MCF 10A (cell line): ENCODE measurements at regions of chr4 and their contacts with region 1.

Region 1: GRCh38 chr4:74376888-74377483 is 12.0 kb downstream of the EREG start:
- DNase-seq: peak; percentile 79
- H3K4me3 Mint-ChIP-seq: peak overlapping the region; percentile 71
- H3K27ac Mint-ChIP-seq: peak overlapping the region; percentile 97
- H3K4me1 Mint-ChIP-seq: peaks cover 20% of the 10 kb centered on the region
- H3K27me3 Mint-ChIP-seq: no peaks in the 10 kb centered on the region
- CTCF ChIP-seq: peak; percentile 71

Region 2: DNA sequence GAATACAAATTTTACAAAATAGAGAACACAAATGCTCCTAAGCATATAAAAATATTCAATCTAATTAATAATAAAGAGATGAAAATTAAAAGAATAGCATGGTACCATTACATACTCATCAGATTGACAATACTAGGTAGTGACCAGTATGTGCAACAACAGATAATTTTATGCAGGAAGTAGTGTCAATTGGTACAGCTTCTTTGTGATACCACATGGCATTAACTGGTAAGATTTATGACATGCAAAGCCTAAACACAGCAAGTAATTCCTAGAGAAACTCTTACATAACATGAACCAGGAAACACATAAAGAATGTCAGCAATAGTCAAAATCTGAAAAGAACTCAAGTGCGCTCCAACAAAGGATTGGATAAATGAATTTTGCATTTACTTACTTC is 304.2 kb before region 1 on chr4:
- CTCF ChIA-PET with region 1: no interaction called
- POLR2A ChIA-PET with region 1: no interaction called
- intact Hi-C with region 1: no loop called
- DNase-seq: no peak
- H3K4me3 Mint-ChIP-seq: no peak overlapping the region
- H3K27ac Mint-ChIP-seq: no peak overlapping the region
- H3K4me1 Mint-ChIP-seq: no peaks in the 10 kb centered on the region
- H3K27me3 Mint-ChIP-seq: no peaks in the 10 kb centered on the region
- CTCF ChIP-seq: no peak

Region 3: DNA sequence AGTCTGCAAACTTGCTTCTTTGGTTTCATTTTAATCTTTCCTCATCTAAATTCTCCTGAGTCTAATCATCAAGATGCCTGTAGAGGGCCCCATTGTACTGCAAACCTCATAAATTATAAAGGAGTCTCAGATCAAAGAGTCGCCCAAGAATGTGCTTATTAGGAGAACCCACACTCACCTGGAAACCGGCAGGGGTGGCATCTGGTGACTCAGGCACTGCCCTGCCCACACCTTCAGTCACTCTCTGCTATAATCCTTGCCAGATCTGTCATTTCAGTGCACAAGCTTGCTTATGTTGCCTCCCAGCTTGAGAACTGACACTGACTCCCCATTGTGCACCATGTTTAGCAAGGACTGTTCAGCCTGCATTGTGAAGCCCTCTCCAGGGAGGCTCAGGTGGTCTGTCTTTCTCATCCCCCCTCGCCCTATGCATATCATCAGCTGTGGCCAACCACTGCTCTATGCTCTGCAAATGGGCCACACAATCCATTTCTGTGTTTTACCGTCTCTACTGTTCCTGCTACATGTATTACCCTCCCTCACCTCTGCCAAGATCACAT is 56.3 kb before region 1 on chr4:
- CTCF ChIA-PET with region 1: interaction called, 28 read pairs
- POLR2A ChIA-PET with region 1: interaction called, 23 read pairs
- intact Hi-C with region 1: loop called (anchors 1 kb)
- DNase-seq: peak; percentile 90
- H3K4me3 Mint-ChIP-seq: no peak overlapping the region
- H3K27ac Mint-ChIP-seq: no peak overlapping the region
- H3K4me1 Mint-ChIP-seq: peaks cover 36% of the 10 kb centered on the region
- H3K27me3 Mint-ChIP-seq: no peaks in the 10 kb centered on the region
- CTCF ChIP-seq: peak; percentile 67

Region 4: GRCh38 chr4:74364652-74365491 is 12.1 kb before region 1 on chr4 and contains the start of gene EREG:
- CTCF ChIA-PET with region 1: interaction called, 4 read pairs
- POLR2A ChIA-PET with region 1: interaction called, 3 read pairs
- intact Hi-C with region 1: loop called (anchors 1 kb)
- DNase-seq: peak; percentile 66
- H3K4me3 Mint-ChIP-seq: peak within 1 kb of the TSS; percentile 77
- H3K27ac Mint-ChIP-seq: peak within 1 kb of the TSS; percentile 59
- H3K4me1 Mint-ChIP-seq: peaks cover 17% of the 10 kb centered on the region
- H3K27me3 Mint-ChIP-seq: no peaks in the 10 kb centered on the region
- CTCF ChIP-seq: no peak
- total RNA-seq, gene EREG: 28.3 and 34.0 TPM in 2 replicates

Region 5: DNA sequence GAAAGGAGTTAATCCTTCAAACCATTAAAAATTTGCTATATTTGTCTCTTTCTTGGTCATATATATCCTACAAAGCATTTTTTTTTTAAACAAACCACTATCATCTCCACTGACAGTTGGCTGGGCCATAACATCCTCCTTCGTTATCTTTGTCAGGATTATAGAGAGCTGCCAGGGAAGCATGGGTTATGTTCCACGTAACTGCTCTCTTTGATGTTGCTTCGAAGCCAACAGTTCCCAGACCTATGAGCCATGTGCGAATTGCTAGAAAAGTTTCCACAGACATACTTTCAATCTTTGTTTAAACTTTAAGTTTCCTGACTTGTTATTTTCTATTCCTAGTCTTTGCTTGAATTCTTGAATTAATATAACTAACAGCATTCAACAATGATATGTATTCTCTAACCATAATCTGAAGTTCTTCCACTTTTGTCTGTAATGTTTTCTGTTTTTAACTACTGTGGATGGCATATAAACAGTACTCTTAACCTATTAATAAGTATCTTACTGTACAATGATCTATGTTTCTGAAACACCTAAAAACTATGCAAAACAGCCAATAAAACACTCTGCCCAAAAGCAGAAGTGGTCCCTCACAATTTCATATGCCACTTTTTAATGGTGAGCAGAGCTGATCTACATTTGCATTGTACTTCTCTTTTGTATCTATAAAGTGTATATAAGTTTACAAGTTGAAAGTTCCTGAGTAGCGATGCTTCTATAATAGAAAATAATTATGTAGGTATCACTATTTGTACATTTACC is 25.9 kb after region 1 on chr4:
- CTCF ChIA-PET with region 1: interaction called, 12 read pairs
- POLR2A ChIA-PET with region 1: interaction called, 28 read pairs
- intact Hi-C with region 1: no loop called
- DNase-seq: no peak
- H3K4me3 Mint-ChIP-seq: no peak overlapping the region
- H3K27ac Mint-ChIP-seq: no peak overlapping the region
- H3K4me1 Mint-ChIP-seq: peaks cover 6% of the 10 kb centered on the region
- H3K27me3 Mint-ChIP-seq: no peaks in the 10 kb centered on the region
- CTCF ChIP-seq: no peak

Region 6: DNA sequence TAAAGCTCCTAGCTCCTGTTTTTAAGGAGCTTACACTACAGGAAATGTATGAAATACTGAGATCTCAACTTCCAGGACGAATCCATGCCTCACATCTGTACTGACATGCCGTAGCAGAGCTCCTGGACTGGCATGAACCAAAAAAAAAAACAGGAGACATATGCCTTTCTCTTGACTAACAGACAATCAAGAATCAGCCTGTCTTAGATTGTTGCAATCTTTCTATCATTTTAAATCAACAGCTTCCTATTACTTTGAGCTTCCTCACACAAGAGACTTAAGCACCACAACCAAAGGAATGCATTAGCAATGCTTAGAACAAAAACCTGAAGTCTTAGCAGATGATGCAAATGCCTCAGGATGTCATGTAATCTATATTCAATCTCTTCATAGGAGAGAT is 33.3 kb after region 1 on chr4:
- CTCF ChIA-PET with region 1: interaction called, 8 read pairs
- POLR2A ChIA-PET with region 1: interaction called, 28 read pairs
- intact Hi-C with region 1: no loop called
- DNase-seq: peak; percentile 70
- H3K4me3 Mint-ChIP-seq: peak overlapping the region; percentile 55
- H3K27ac Mint-ChIP-seq: peak overlapping the region; percentile 97
- H3K4me1 Mint-ChIP-seq: peaks cover 42% of the 10 kb centered on the region
- H3K27me3 Mint-ChIP-seq: no peaks in the 10 kb centered on the region
- CTCF ChIP-seq: no peak

Region 7: DNA sequence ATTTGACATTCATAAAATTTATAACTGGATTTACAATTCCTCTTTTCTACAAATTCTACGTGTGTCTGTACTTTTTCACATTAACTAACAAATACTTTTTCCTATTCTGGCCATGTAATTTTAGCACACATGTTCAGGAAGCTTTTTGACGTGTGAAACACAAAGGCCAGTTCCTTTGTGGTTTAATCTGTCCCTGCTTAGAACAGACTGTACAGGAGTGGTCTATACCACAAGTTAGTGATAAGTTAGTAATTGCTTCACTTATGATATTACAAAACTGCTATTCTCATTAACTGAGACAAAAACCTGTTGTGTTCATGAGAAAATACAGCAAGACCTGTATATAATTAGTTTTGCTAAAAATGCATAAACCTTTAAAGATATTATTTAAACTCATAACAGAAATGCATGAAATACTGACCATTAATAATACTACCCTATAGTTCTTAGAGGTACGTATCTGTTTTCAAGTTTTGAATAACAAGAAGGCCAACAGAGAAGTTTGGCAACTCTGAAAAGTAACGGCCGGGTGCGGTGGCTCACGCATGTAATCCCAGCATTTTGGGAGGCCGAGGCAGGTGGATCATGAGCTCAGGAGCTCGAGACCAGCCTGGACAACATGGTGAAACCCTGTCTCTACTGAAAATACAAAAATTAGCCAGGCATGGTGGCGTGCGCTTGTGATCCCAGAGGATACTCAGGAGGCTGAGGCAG is 54.3 kb after region 1 on chr4:
- CTCF ChIA-PET with region 1: interaction called, 15 read pairs
- POLR2A ChIA-PET with region 1: interaction called, 9 read pairs
- intact Hi-C with region 1: no loop called
- DNase-seq: peak; percentile 86
- H3K4me3 Mint-ChIP-seq: peak overlapping the region; percentile 45
- H3K27ac Mint-ChIP-seq: peak overlapping the region; percentile 87
- H3K4me1 Mint-ChIP-seq: peaks cover 35% of the 10 kb centered on the region
- H3K27me3 Mint-ChIP-seq: no peaks in the 10 kb centered on the region
- CTCF ChIP-seq: no peak

Region 8: DNA sequence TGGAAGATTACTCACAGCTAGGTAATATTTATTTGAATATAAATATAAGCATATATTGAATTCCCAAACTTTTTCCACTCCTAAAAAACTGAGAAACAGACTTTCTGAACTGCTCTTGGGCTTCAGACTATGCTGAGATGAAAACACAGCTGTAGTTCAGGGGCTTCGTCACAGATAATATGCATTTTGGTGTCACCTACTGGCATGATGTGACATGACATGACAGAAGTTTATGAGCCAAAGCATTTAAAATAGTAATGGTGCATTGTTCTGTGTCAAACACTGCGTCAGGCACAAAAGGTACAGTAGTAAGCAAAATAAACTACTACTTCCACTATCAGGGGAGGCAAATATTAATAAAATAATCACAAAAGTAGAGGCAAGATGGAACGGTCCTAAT is 246.1 kb after region 1 on chr4:
- CTCF ChIA-PET with region 1: interaction called, 4 read pairs
- POLR2A ChIA-PET with region 1: interaction called, 4 read pairs
- intact Hi-C with region 1: loop called (anchors 1 kb)
- DNase-seq: peak; percentile 74
- H3K4me3 Mint-ChIP-seq: no peak overlapping the region
- H3K27ac Mint-ChIP-seq: no peak overlapping the region
- H3K4me1 Mint-ChIP-seq: peaks cover 52% of the 10 kb centered on the region
- H3K27me3 Mint-ChIP-seq: no peaks in the 10 kb centered on the region
- CTCF ChIP-seq: peak; percentile 47